ENCODE measurements at regions of chr10 and their contacts with region 1.

Region 1: GRCh38 chr10:69202332-69202731 is 17.8 kb upstream of the HKDC1 start:
- DNase-seq: no peak
- H3K4me3 ChIP-seq: no peak overlapping the region
- H3K27ac ChIP-seq: peak overlapping the region; percentile 37; the same call in 1 of the 2 replicates
- H3K4me1 ChIP-seq: no peaks in the 10 kb centered on the region
- H3K27me3 ChIP-seq: no peaks in the 10 kb centered on the region
- CTCF ChIP-seq: no peak

Region 2: GRCh38 chr10:69559525-69559924 is 357.2 kb after region 1 on chr10:
- CTCF ChIA-PET with region 1: no interaction called
- POLR2A ChIA-PET with region 1: interaction called, 12 read pairs
- intact Hi-C with region 1: no loop called
- DNase-seq: no peak
- H3K4me3 ChIP-seq: no peak overlapping the region
- H3K27ac ChIP-seq: no peak overlapping the region
- H3K4me1 ChIP-seq: no peaks in the 10 kb centered on the region
- H3K27me3 ChIP-seq: peaks cover 78% of the 10 kb centered on the region
- CTCF ChIP-seq: no peak